Activated CD4-positive, alpha-beta memory T cell treated with anti-CD3 and anti-CD28 coated beads for 36 hours (primary cell): ENCODE measurements at regions of chr2 and their contacts with region 1.

Region 1: GRCh38 chr2:102240640-102241370 is 54.0 kb downstream of the IL1RL2 start:
- DNase-seq: peak; percentile 92
- H3K4me3 Mint-ChIP-seq: peak overlapping the region; percentile 5
- H3K27ac Mint-ChIP-seq: peak overlapping the region; percentile 78
- H3K4me1 Mint-ChIP-seq: peaks cover 38% of the 10 kb centered on the region
- H3K27me3 Mint-ChIP-seq: no peaks in the 10 kb centered on the region

Region 2: GRCh38 chr2:101883863-101884262 is 356.9 kb before region 1 on chr2:
- CTCF ChIA-PET with region 1: interaction called, 118 read pairs
- POLR2A ChIA-PET with region 1: interaction called, 3 read pairs
- intact Hi-C with region 1: loop called (anchors 1 kb)
- DNase-seq: peak; percentile 60
- H3K4me3 Mint-ChIP-seq: no peak overlapping the region
- H3K27ac Mint-ChIP-seq: peak overlapping the region; percentile 2
- H3K4me1 Mint-ChIP-seq: peaks cover 21% of the 10 kb centered on the region
- H3K27me3 Mint-ChIP-seq: no peaks in the 10 kb centered on the region

Region 3: DNA sequence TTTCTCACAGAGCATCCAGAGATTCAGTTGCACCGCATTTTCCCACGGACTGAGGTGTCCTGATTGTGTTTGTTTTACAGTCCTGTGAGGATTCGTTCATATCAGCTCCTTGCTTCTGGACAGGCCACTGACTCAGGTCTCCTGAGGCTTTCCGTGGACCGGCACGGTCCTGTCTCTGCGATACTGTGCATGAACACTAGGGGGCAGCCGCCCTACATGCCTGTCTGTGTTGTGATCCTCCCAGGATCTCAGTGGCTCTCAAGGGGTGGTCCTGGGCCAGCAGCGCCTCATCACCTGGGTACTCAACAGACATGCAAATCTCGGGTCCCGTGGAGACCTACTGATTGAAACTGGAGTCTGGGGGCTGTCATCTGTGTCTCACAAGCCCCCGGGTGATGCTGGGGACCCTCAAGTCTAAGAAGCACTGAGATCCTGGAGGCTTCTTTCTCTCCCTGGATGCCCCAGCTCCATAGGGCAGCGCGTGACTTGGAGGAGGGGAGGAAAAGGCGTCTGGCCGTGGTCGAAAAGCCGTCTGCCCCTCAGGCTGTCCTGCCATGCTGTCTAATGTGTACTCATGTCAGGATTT is 220.1 kb before region 1 on chr2:
- CTCF ChIA-PET with region 1: interaction called, 117 read pairs
- POLR2A ChIA-PET with region 1: no interaction called
- intact Hi-C with region 1: loop called (anchors 1 kb)
- DNase-seq: peak; percentile 91
- H3K4me3 Mint-ChIP-seq: no peak overlapping the region
- H3K27ac Mint-ChIP-seq: peak overlapping the region; percentile 66
- H3K4me1 Mint-ChIP-seq: peaks cover 71% of the 10 kb centered on the region
- H3K27me3 Mint-ChIP-seq: peaks cover 2% of the 10 kb centered on the region

Region 4: DNA sequence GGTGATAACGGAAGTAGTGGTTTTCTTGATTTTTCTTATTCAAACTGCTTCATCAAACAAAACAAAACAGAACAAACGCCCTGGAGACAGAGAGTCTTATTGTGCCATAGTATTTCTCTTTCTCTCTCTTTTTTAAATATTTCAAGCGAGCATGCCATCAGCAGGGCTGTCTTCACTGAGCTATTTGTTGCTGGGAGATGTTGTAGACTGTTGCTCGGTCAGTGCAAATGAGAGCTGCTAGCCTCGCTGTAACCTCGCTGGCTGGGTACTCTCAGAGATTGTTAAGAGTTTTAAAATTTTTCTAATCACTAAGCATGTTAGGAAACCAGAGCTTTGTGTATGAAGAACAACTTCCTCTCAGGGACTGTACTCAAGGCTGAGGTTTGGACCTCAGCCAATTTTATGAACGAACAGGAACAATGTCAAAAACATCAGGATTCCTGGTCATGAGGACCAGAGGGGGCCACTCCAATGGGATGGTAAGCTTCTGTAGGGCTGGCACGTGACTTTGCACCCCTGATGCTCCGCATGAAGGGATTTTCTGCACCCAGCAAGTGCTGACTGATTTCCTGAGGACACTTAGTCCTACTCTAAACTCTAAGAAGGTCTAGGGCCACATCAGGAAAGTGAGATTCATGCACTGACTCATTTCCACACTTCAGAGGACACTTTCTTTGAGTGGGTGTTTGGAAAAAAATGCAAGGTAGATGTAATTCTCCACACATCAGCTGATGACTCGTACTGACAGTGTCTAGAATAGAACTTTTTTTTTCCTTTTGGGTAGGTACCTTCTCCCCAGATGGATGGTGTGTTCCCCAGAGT is 158.0 kb before region 1 on chr2:
- CTCF ChIA-PET with region 1: interaction called, 15 read pairs
- POLR2A ChIA-PET with region 1: no interaction called
- intact Hi-C with region 1: no loop called
- DNase-seq: peak; percentile 80
- H3K4me3 Mint-ChIP-seq: peak overlapping the region; percentile 57
- H3K27ac Mint-ChIP-seq: peak overlapping the region; percentile 92
- H3K4me1 Mint-ChIP-seq: peaks cover 64% of the 10 kb centered on the region
- H3K27me3 Mint-ChIP-seq: no peaks in the 10 kb centered on the region

Region 5: GRCh38 chr2:102147935-102148334 is 92.9 kb before region 1 on chr2:
- CTCF ChIA-PET with region 1: interaction called, 13 read pairs
- POLR2A ChIA-PET with region 1: no interaction called
- intact Hi-C with region 1: no loop called
- DNase-seq: peak; percentile 82
- H3K4me3 Mint-ChIP-seq: peak overlapping the region; percentile 3
- H3K27ac Mint-ChIP-seq: peak overlapping the region; percentile 79
- H3K4me1 Mint-ChIP-seq: peaks cover 31% of the 10 kb centered on the region
- H3K27me3 Mint-ChIP-seq: peaks cover 11% of the 10 kb centered on the region

Region 6: DNA sequence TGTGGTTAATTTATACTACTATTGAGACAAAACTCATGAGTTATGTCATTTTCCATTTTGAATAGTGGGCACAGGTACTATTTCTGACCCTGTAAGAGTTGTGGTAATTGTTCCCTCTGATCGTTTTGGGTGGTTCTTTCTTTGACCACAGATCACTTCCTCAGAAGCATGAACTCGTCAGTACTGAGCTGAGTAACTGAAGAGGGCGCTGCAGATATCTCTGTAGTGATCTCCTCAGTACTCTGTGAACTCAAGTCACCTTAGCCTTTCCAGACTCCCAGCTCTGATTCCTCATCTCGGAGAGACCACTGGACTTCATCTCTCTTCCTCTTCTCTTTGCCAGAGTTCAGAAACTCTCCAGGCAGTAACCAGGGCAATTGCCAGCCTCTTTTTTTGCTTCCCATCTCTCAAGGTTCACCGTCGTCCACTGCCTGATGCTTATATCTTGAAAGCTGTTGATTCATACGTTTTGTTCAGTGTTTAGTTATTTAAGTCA is 61.1 kb after region 1 on chr2:
- CTCF ChIA-PET with region 1: interaction called, 21 read pairs
- POLR2A ChIA-PET with region 1: no interaction called
- intact Hi-C with region 1: no loop called
- DNase-seq: peak; percentile 65
- H3K4me3 Mint-ChIP-seq: peak overlapping the region; percentile 4
- H3K27ac Mint-ChIP-seq: peak overlapping the region; percentile 55
- H3K4me1 Mint-ChIP-seq: peaks cover 45% of the 10 kb centered on the region
- H3K27me3 Mint-ChIP-seq: peaks cover 4% of the 10 kb centered on the region

Region 7: DNA sequence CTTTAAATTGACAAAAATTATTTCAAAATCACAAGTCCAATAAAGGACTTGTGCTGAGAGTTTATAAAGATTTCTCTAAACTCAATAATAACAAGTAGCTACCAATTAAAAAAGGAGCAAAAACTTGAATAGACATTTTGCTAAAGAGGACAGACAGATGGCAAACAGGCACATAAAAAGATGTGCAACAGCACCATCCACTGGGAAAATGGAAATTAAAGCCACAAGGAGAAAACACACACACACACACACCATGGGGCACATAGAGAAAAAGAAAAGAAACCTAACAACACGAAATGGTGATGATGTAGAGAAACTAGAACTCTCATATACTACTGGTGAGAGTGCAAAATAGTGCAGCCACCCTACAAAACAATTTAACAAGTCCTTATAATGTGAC is 219.7 kb after region 1 on chr2:
- CTCF ChIA-PET with region 1: interaction called, 10 read pairs
- POLR2A ChIA-PET with region 1: no interaction called
- intact Hi-C with region 1: no loop called
- DNase-seq: no peak
- H3K4me3 Mint-ChIP-seq: no peak overlapping the region
- H3K27ac Mint-ChIP-seq: no peak overlapping the region
- H3K4me1 Mint-ChIP-seq: no peaks in the 10 kb centered on the region
- H3K27me3 Mint-ChIP-seq: peaks cover 7% of the 10 kb centered on the region